Activated B cell treated with CpG ODN at 0.5 μM for 24 hours (primary cell): ENCODE measurements at regions of chr3 and their contacts with region 1.

Region 1: GRCh38 chr3:125150525-125151441 is 61.8 kb downstream of the SLC12A8 start:
- DNase-seq: no peak
- ATAC-seq: peak; percentile 55
- H3K4me3 Mint-ChIP-seq: no peak overlapping the region
- H3K27ac Mint-ChIP-seq: no peak overlapping the region
- H3K4me1 Mint-ChIP-seq: peaks cover 56% of the 10 kb centered on the region
- H3K27me3 Mint-ChIP-seq: no peaks in the 10 kb centered on the region
- CTCF ChIP-seq: no peak

Region 2: DNA sequence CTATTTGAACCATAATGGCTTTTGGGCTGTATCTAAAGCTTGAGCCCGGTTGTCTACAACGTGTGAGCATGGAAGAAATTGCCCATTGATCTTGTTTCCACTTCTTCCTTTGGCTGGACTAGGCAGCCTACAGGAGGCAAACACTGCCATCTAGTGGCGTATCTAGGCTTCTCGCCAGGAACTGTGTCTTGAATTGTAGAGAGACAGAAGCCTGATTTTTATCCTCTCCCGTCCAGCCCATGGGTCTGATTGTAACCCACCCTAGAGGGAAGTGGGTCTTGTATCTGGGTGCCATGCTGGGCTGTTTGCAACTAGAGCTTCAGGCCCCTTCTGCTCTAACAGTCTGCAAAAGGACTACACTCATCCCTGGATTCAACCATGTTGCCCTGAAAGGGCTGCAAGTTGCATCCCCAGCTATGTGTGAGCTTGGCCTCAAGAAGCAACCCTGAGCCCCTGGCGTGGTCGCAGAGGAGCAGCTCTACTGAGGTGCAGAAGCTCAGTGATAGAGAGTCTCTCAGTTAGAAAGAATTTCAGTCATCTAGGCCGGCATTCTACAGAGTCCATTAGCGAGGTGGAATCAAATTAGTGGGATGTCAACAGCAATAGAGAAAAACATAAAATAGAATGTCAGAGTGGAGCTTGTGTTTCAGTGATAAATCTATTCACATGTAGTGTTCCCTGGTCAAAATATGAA is 590.8 kb before region 1 on chr3:
- CTCF ChIA-PET with region 1: no interaction called
- POLR2A ChIA-PET with region 1: no interaction called
- intact Hi-C with region 1: no loop called
- DNase-seq: no peak
- ATAC-seq: peak; percentile 31
- H3K4me3 Mint-ChIP-seq: no peak overlapping the region
- H3K27ac Mint-ChIP-seq: no peak overlapping the region
- H3K4me1 Mint-ChIP-seq: no peaks in the 10 kb centered on the region
- H3K27me3 Mint-ChIP-seq: peaks cover 29% of the 10 kb centered on the region
- CTCF ChIP-seq: no peak

Region 3: DNA sequence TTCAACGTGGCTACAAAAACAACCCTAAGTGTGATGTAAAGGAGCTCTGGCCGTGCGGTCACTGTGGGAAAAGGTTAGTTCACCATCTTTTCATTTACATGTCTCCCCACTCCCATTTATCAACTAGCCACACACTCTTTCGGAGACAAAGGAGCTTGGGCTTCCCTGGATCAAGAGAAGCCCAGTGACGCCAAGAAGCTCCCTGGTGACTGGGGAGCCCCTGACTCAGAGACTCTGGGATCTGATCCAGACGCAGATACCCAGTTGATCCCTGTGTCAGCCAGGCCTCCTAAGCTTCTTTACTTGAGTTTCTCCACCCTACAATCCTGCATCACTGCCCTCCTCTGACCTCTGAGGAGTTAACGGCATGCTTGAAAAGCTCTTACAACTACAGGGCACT is 138.8 kb before region 1 on chr3:
- CTCF ChIA-PET with region 1: no interaction called
- POLR2A ChIA-PET with region 1: no interaction called
- intact Hi-C with region 1: no loop called
- DNase-seq: no peak
- ATAC-seq: no peak
- H3K4me3 Mint-ChIP-seq: no peak overlapping the region
- H3K27ac Mint-ChIP-seq: no peak overlapping the region
- H3K4me1 Mint-ChIP-seq: no peaks in the 10 kb centered on the region
- H3K27me3 Mint-ChIP-seq: no peaks in the 10 kb centered on the region
- CTCF ChIP-seq: no peak

Region 4: DNA sequence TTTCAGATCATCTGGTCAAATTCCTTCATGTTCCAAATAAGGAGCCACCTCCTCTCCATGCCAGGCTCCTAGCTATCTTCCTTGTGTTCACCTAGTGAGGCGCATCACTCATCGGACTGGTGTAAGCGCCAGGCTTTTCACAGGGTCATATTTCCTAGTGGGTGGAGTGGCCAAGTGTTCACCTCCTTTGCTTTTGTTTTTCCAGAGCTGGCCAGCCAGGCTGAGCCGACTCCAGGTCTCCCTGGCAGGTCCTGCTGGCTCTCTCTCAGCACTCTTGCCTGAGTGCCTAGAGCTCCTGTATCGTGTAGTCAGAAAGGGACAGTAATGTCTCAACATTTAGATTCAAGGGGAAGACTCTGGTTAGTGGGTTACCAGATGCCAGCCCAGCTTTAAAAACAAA is 126.0 kb before region 1 on chr3:
- CTCF ChIA-PET with region 1: no interaction called
- POLR2A ChIA-PET with region 1: no interaction called
- intact Hi-C with region 1: no loop called
- DNase-seq: no peak
- ATAC-seq: no peak
- H3K4me3 Mint-ChIP-seq: no peak overlapping the region
- H3K27ac Mint-ChIP-seq: no peak overlapping the region
- H3K4me1 Mint-ChIP-seq: peaks cover 10% of the 10 kb centered on the region
- H3K27me3 Mint-ChIP-seq: no peaks in the 10 kb centered on the region
- CTCF ChIP-seq: no peak

Region 5: DNA sequence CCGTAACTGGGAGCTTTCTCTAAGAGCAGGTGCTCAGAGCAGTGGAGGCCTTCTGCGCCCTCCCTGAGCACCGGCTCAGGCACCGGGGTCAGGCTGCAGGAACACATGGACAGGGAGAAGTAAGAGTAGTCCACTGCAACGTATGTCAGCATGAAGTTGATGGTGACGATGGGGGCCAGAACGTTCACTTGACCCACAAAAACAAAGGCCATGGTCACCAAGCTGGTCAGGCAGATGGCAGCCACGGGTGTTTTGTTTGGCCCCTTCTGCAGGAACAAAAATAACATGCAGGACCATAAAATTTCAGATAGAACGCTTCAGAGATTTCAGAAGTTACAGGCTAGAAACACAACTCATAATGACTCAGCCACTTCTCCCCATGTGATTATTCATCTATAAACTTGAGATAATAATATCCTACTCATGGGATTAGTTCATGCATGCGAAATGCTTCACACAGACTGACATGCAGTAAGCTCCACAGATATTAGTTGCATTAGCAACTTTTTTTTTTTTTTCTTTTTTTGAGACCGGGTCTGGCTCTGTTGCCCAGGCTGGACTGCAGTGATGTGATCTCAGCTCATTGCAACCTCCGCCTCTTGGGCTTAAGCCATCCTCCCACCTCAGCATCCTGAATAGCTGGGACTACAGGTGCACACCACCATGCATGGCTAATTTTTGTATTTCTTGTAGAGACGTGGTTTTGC is 42.8 kb before region 1 on chr3:
- CTCF ChIA-PET with region 1: interaction called, 3 read pairs
- POLR2A ChIA-PET with region 1: no interaction called
- intact Hi-C with region 1: loop called (anchors 5 kb)
- DNase-seq: no peak
- ATAC-seq: peak; percentile 79
- H3K4me3 Mint-ChIP-seq: peak overlapping the region; percentile 4
- H3K27ac Mint-ChIP-seq: peak overlapping the region; percentile 8
- H3K4me1 Mint-ChIP-seq: peaks cover 31% of the 10 kb centered on the region
- H3K27me3 Mint-ChIP-seq: no peaks in the 10 kb centered on the region
- CTCF ChIP-seq: no peak

Region 6: GRCh38 chr3:125202197-125202596 is 51.4 kb after region 1 on chr3:
- CTCF ChIA-PET with region 1: no interaction called
- POLR2A ChIA-PET with region 1: no interaction called
- intact Hi-C with region 1: no loop called
- DNase-seq: no peak
- ATAC-seq: peak; percentile 50
- H3K4me3 Mint-ChIP-seq: no peak overlapping the region
- H3K27ac Mint-ChIP-seq: no peak overlapping the region
- H3K4me1 Mint-ChIP-seq: peaks cover 8% of the 10 kb centered on the region
- H3K27me3 Mint-ChIP-seq: peaks cover 3% of the 10 kb centered on the region
- CTCF ChIP-seq: no peak

Region 7: GRCh38 chr3:125437631-125438435 is 287.1 kb after region 1 on chr3:
- CTCF ChIA-PET with region 1: interaction called, 3 read pairs
- POLR2A ChIA-PET with region 1: no interaction called
- intact Hi-C with region 1: loop called (anchors 1 kb)
- DNase-seq: peak; percentile 42
- ATAC-seq: peak; percentile 57
- H3K4me3 Mint-ChIP-seq: no peak overlapping the region
- H3K27ac Mint-ChIP-seq: no peak overlapping the region
- H3K4me1 Mint-ChIP-seq: no peaks in the 10 kb centered on the region
- H3K27me3 Mint-ChIP-seq: no peaks in the 10 kb centered on the region
- CTCF ChIP-seq: peak; percentile 95